Psoas muscle (tissue), 8 donors: ENCODE measurements at regions of chr1 and their contacts with region 1.

Region 1: DNA sequence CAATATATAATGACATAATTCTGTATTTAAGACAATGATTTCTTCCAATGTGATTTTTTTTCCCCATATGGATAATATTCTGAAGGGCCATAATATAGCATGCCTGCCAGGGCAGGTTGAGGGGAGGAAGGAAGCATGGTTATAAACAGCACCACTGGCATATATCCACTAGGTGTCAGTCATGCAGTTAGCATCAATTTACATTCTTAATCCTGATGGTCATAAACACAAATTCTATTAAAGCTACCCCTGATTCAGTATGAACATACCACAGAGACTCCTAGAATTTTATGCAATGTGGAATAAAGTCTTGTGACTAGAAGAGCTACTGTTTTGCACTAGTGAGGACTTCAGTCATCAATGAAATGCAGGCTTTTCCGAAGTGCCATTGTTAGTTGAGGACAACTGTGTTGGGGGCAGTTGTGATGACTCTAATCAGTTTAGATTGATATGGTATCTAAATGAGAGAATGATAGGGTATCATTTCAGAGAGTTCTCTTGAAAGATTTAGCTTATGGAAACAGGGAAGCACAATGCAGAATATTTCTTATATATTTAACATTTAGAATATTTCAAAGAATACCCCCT is 342.7 kb upstream of the NR5A2 start:
- DNase-seq: no peak
- ATAC-seq: peak; percentile 49 to 74 (median 62)
- H3K4me3 ChIP-seq: no peak overlapping the region
- H3K27ac ChIP-seq: no peak overlapping the region
- H3K4me1 ChIP-seq: no peaks in the 10 kb centered on the region
- H3K27me3 ChIP-seq: no peaks in the 10 kb centered on the region
- CTCF ChIP-seq: peak; percentile 82

Region 2: DNA sequence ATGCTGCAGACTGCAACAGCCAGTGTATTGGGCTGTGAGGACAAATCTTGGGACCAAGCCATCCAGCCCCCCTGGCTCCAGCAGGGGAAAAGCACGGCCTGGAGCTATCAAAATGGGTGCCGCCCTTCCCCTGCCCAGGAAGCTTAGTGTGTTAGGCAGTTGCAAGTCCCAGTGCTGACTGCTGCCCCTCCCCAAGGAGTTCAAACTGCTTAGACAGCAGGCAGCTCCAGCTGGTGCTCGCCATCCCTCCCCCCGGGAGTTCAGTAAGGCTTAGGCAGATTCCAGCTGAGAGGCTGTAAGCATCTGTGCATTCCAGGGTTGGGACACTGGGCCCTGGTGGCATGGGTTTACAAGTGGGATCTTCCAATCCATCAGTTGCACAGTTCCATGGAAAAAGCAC is 236.9 kb before region 1 on chr1:
- intact Hi-C with region 1: no loop called
- DNase-seq: no peak
- ATAC-seq: no peak
- H3K4me3 ChIP-seq: no peak overlapping the region
- H3K27ac ChIP-seq: no peak overlapping the region
- H3K4me1 ChIP-seq: no peaks in the 10 kb centered on the region
- H3K27me3 ChIP-seq: no peaks in the 10 kb centered on the region
- CTCF ChIP-seq: no peak

Region 3: DNA sequence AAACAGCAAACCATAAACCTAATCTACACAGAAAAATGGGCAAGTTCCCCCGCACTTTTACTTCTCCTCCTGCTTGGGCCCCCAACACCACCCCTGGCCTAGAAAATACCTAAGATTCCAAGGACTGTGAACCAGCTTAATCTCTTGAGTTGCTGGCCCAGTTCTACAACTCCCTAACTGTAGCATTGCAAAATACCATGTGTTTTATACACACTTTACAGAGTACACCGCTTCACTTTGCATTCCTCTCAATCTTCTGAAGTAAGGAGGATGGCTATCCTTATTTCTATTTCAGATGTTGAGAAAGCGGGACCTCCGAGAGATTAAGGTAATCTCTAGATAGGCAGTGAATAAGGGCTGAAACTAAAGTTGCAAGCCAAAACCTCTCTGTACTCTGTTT is 65.6 kb before region 1 on chr1:
- intact Hi-C with region 1: no loop called
- DNase-seq: no peak
- ATAC-seq: no peak
- H3K4me3 ChIP-seq: no peak overlapping the region
- H3K27ac ChIP-seq: no peak overlapping the region
- H3K4me1 ChIP-seq: no peaks in the 10 kb centered on the region
- H3K27me3 ChIP-seq: no peaks in the 10 kb centered on the region
- CTCF ChIP-seq: no peak

Region 4: DNA sequence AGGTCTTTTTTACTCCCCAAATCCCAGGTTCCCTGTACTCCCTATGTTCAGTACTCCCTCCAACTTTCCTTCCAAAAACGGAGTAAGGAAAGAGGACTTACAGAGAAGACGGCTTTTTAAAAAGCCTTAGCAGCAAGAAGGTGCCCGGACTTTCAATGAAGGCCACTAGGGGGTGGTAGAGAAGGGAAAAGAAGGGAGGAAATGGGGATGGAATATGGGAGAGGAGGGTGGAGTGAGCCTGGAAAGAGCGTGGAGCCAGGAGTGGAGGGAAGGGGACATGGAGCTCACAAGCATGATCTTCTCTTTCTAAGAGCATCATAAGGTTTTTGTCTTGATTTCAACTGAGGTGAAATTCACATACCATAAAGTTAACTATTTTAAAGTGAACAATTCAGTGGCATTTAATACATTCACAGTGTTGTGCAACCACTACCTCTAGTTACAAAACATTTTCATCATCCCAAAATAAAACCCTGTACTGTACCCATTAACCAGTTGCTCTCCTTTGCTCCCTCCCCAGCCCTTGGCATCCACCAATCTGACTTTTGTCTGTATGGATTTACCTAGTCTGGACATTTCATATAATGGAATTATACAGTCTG is 595.1 kb after region 1 on chr1:
- intact Hi-C with region 1: loop called in 1 of 2 experiments (anchors 10 kb)
- DNase-seq: no peak
- ATAC-seq: no peak
- H3K4me3 ChIP-seq: no peak overlapping the region
- H3K27ac ChIP-seq: no peak overlapping the region
- H3K4me1 ChIP-seq: no peaks in the 10 kb centered on the region
- H3K27me3 ChIP-seq: peaks cover 0 to 2% (median 0%) of the 10 kb centered on the region in 3 donors
- CTCF ChIP-seq: peak; percentile 46

Region 5: DNA sequence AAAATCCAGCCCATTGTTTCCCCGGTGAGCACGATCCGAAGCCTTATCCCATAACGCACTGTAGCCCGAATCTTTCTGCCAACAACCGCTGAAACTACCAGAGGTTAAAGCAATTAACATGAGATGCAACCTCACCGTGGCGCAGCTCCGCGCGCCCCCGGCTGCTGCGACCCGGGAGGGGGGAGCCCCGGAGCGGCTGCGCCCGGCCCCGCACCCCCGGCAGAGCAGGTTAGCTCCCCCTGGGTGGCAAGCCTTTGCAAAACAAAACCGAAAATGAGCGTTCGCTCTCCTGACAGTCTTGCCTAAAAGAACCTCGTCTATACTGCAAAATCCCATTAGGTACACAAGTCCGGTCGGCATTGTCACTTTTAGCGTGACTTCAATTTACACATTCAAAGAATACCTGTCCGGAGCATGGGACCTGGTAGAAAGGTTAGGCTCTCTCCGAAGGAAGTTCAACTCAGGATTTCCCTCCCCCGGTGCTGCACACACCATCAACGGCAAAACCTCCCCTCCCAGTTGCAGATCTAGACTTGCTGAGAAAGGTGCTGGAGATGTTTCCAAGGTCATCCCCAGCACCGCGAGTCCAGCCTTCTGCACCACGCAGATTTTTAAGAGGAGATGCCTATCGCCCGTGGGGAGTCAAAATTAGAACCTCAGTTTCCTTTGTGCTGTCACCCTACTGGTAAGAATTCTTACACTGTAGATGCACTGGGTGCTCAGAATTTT is 617.6 kb after region 1 on chr1:
- intact Hi-C with region 1: loop called in 1 of 2 experiments (anchors 5 kb)
- DNase-seq: no peak
- ATAC-seq: peak in 3 of 4 donors; percentile 8 to 41 (median 26)
- H3K4me3 ChIP-seq: peak overlapping the region; percentile 75
- H3K27ac ChIP-seq: no peak overlapping the region
- H3K4me1 ChIP-seq: no peaks in the 10 kb centered on the region
- H3K27me3 ChIP-seq: peaks cover 0 to 18% (median 2%) of the 10 kb centered on the region in 3 donors
- CTCF ChIP-seq: no peak

Region 6: DNA sequence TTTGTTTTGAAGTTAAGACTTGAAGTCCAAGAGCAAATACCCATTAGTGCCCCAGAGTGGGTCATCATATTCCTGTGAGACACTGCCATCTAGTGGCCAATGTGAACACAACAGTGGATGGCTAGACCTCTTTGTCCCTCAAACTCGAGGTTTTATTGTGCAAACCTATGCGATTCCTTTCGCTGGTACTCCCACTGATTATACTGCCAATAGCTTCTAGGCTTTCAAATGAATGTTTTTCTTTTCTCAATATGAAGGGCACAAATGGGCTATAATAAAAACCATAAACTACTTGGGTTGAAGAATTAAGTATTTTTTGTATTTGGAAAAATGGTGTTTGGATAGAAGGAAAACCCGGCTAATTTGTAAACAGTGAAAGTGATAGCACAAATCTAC is 825.4 kb after region 1 on chr1:
- intact Hi-C with region 1: loop called (anchors 5 kb)
- DNase-seq: peak in 1 of 2 donors; percentile 31
- ATAC-seq: peak; percentile 68 to 86 (median 77)
- H3K4me3 ChIP-seq: no peak overlapping the region
- H3K27ac ChIP-seq: no peak overlapping the region
- H3K4me1 ChIP-seq: no peaks in the 10 kb centered on the region
- H3K27me3 ChIP-seq: peaks cover 0 to 2% (median 0%) of the 10 kb centered on the region in 3 donors
- CTCF ChIP-seq: peak; percentile 95